Calu3 (cell line): ENCODE measurements at regions of chr6 and their contacts with region 1.

Region 1: DNA sequence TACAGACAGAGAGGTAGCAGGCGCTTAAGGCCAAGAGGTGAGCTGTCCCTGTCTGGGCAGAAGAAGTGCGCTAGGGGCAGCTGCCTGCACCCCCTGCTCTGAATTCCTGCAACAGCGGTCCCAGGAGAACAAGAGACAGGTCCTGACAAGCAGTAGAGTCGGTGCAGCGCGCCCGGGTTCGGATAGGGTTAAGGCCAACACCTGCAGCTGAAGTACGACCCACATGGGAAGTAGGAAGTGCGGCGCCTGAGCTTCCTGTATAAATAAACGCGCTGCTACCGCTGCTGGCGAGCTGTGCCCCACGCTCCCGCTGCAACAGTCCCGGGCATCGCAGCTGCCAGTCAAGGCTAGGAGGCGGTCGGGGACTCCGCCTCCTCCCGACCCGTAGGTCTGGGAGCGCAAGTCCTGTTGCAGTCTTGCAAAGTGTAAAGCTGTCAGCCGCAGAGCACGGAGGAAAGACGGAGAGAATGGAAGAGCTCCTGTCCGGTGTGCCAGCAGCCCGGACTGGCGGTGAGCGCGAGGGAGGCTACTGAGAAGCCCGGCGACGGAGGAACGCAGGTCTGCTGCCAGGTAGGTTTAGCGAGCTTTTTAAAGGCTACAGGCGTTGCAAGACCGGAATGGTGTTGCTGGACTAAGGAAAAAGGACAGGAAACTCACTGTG is at the start of gene RNF144B:
- DNase-seq: peak; percentile 78
- H3K4me3 Mint-ChIP-seq: peak within 1 kb of the TSS; percentile 96
- H3K27ac Mint-ChIP-seq: peak within 1 kb of the TSS; percentile 65
- H3K4me1 Mint-ChIP-seq: peaks cover 27% of the 10 kb centered on the region
- H3K27me3 Mint-ChIP-seq: no peaks in the 10 kb centered on the region
- CTCF ChIP-seq: no peak
- total RNA-seq, gene RNF144B: 7.4 and 12.1 TPM in 2 replicates

Region 2: GRCh38 chr6:17706580-17707370 is 680.4 kb before region 1 on chr6 and contains the start of gene NUP153:
- CTCF ChIA-PET with region 1: no interaction called
- intact Hi-C with region 1: no loop called
- DNase-seq: peak; percentile 95
- H3K4me3 Mint-ChIP-seq: peak within 1 kb of the TSS; percentile 73
- H3K27ac Mint-ChIP-seq: peak within 1 kb of the TSS; percentile 91
- H3K4me1 Mint-ChIP-seq: no peaks in the 10 kb centered on the region
- H3K27me3 Mint-ChIP-seq: no peaks in the 10 kb centered on the region
- CTCF ChIP-seq: no peak
- total RNA-seq, gene NUP153: 36.3 and 36.4 TPM in 2 replicates

Region 3: DNA sequence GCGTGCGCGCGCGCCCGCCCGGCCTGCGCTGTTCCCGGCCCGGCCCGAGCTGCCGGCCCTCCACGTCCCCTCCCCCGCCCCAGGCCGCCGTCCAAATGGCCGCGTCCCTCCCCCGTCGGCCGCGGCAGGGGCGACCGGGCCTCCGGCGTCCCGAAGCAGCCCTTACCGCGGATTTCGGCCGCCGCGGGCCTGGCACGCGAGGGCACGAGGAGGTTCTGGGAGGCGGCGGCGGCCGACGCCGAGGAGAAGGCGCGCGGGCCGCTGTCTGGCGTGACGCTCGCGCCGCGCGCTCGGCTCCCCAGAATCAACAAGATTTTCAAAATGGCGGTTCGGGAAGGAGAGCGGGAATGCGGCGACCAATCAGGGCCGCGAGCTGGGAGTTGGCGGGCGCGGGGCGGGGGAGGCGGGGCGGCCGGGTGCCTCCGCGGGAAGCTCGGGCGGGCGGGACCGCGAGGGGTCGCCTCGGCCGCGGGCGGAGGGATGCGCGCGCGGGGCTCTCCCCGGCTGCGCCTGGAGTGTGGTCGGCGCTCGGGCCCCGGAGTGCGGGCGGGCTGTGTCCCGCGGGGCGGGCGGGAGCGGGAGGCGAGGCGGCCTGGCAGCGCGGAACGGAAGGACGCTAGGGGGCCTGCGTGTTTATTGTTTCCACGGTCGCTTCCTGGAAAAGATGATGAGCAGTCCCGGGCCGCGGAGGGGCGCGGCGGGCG is 122.8 kb before region 1 on chr6 and contains the start of gene DEK:
- CTCF ChIA-PET with region 1: no interaction called
- intact Hi-C with region 1: loop called (anchors 5 kb)
- DNase-seq: peak; percentile 72
- H3K4me3 Mint-ChIP-seq: peak within 1 kb of the TSS; percentile 79
- H3K27ac Mint-ChIP-seq: peak within 1 kb of the TSS; percentile 68
- H3K4me1 Mint-ChIP-seq: peaks cover 38% of the 10 kb centered on the region
- H3K27me3 Mint-ChIP-seq: no peaks in the 10 kb centered on the region
- CTCF ChIP-seq: no peak
- total RNA-seq, gene DEK: 96.2 and 108 TPM in 2 replicates